ENCODE measurements at regions of chr2 and their contacts with region 1.

Region 1: DNA sequence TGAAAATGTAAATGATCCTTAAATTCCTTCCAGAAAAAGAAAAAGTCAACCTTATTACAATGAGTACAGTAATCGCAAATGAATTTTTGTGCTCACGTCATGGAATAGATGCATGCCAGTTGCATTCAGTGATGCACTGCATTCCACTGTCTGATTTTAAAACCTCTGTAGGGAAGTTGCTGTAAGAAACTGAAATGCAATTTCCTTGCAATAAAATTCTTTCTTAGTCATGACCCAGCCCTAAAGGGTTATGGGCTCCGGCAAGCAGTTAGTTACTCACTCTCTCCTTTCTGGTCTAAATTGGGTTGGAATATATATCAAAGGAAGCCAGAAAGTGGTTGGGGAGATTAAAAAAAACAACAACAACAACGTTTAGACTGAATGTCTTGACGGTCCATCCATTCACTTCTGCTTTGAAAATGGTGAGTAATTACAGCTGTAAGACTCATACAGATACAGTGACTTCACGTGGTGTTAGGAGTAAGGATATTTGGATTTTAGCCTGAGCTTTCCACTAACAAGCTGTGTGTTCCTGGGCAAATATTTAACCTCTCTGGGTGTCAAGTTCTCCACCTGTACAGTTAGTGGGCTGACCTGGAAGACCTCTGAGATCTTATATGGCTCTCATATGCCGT is 8.6 kb upstream of the RND3 start:
- DNase-seq: no peak
- ATAC-seq: no peak
- H3K4me3 ChIP-seq: no peak overlapping the region
- H3K27ac ChIP-seq: no peak overlapping the region
- H3K4me1 ChIP-seq: no peaks in the 10 kb centered on the region
- H3K27me3 ChIP-seq: no peaks in the 10 kb centered on the region
- CTCF ChIP-seq: no peak

Region 2: DNA sequence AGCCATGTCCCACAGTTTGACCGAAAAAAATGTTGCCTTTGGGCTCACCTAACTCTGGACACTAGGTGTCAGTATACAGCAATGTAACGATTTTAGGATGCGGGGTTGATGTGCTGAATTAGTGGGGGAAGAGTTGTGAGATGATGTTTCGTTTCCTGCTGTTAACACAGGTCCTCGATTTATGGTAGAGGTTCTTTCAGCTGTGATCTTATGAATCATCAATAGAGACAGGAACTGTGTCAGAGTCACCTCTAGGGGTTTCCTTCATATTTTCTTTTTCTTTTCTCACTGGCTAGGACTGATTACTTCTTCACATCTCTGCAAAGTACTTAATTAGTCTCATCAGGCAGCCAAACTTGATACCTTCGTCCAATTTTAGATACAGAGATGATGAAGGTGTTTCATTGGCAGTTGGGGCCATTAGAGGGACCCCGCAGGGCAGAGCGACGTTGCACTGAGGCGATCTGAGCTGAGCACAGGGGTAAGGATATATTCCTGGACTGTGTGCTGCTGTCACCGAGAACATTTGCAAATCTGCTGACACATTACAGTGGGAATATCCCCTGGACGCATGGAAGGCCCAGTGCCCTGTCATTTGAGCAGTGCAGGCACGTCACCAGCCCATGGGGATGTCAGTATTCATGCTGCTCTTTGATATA is 898.3 kb before region 1 on chr2:
- intact Hi-C with region 1: loop called (anchors 10 kb)
- DNase-seq: no peak
- ATAC-seq: peak; percentile 97
- H3K4me3 ChIP-seq: peak overlapping the region; percentile 23
- H3K27ac ChIP-seq: no peak overlapping the region
- H3K4me1 ChIP-seq: no peaks in the 10 kb centered on the region
- H3K27me3 ChIP-seq: no peaks in the 10 kb centered on the region
- CTCF ChIP-seq: peak; percentile 81

Region 3: DNA sequence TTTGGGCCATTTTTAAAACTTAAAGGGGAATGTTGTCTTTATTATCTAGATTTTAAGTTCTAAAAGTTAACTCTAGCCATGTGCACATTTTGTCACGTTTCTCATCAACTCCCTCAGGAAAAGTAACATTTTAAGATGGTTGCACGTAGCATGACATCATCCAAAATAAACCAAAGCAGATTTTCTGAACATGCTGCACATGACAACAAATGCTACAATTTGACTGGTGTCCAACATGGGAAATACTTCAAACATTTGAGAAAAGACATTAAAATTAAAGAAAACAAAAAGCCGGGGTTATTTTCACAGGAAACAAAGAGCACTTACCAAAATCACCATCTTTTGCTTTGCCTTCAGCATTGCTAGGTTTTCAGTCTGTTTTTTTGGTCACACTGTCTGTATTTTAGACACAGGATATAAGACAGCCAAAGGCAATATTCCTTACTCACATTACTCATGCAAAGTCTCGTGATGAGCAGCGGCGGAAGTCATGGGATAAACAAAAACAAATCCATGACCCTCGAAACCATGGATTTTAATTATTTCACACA is 42.6 kb after region 1 on chr2:
- intact Hi-C with region 1: no loop called
- DNase-seq: no peak
- ATAC-seq: no peak
- H3K4me3 ChIP-seq: no peak overlapping the region
- H3K27ac ChIP-seq: no peak overlapping the region
- H3K4me1 ChIP-seq: no peaks in the 10 kb centered on the region
- H3K27me3 ChIP-seq: no peaks in the 10 kb centered on the region
- CTCF ChIP-seq: no peak

Region 4: DNA sequence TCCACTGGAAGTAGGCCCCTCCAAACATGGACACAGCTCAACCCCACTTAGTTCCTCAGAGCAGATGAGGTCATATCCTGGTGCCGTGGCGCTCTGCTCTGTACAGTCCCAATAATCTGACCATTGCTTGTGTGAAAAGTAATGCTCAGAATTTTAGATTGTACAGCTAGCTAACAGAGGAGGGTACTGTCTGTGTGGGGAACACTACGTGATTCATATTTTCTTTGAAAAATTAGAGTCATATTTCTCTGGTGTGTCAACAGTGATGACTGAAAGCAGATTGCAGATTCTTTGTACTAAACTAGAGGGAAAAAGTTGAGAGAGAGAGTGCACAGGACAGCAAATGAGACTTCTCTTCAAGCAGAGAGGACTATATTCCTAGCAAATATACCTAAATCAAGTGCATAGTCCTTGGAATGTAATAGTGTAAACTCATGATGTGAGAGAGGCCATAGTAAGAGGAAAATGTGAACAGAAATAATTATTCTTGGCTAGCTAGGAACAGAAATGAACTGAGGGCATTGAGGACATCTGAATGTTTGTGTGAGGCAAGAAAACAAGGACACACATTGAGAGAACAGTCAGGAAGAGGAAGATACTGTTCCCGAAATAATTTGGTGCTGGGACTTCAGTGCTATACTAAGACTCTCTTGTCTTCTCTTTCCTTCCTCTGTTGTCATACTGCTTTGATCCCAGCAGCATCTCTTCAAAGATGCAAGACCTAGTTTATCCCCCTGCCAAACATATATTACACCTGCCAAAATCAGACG is 148.4 kb after region 1 on chr2:
- intact Hi-C with region 1: no loop called
- DNase-seq: no peak
- ATAC-seq: no peak
- H3K4me3 ChIP-seq: no peak overlapping the region
- H3K27ac ChIP-seq: no peak overlapping the region
- H3K4me1 ChIP-seq: no peaks in the 10 kb centered on the region
- H3K27me3 ChIP-seq: no peaks in the 10 kb centered on the region
- CTCF ChIP-seq: no peak